ENCODE measurements at regions of chr13 and their contacts with region 1.

Region 1: DNA sequence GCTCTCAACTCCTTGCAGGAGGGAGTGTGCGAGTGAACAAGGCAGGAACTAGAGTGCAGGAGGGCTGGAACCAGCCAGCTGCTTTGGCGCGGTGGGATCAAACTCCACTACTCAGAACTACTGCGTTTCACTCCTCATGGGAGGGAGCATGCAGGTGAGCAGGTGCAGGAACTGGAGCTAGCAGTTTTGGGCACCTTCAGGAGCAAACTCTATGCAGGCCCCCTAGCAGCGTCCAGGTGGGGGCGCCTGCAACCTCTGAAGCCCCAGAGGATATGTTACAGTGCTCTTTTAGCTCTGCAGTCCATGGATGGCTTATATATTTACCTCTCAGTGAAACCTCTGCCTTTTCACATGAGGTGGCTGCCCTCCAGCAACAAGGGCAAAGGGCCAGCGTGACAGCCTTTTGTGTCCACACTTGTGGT is 1303.4 kb downstream of the PCDH9 start:
- DNase-seq: no peak
- ATAC-seq: no peak
- H3K4me3 ChIP-seq: no peak overlapping the region
- H3K27ac ChIP-seq: no peak overlapping the region
- H3K4me1 ChIP-seq: no peaks in the 10 kb centered on the region
- H3K27me3 ChIP-seq: no peaks in the 10 kb centered on the region
- CTCF ChIP-seq: no peak
- POLR2A ChIP-seq: no peak
- RAD21 ChIP-seq: no peak

Region 2: GRCh38 chr13:65943024-65943423 is 16.3 kb after region 1 on chr13:
- CTCF ChIA-PET with region 1: no interaction called
- POLR2A ChIA-PET with region 1: interaction called, 12 read pairs
- dilution Hi-C with region 1: no loop called
- in situ Hi-C with region 1: no loop called
- intact Hi-C with region 1: no loop called
- DNase-seq: peak; percentile 45
- ATAC-seq: no peak
- H3K4me3 ChIP-seq: no peak overlapping the region
- H3K27ac ChIP-seq: no peak overlapping the region
- H3K4me1 ChIP-seq: no peaks in the 10 kb centered on the region
- H3K27me3 ChIP-seq: no peaks in the 10 kb centered on the region
- CTCF ChIP-seq: no peak
- POLR2A ChIP-seq: no peak
- RAD21 ChIP-seq: no peak

Region 3: GRCh38 chr13:65971541-65971940 is 44.8 kb after region 1 on chr13:
- CTCF ChIA-PET with region 1: no interaction called
- POLR2A ChIA-PET with region 1: no interaction called
- dilution Hi-C with region 1: no loop called
- in situ Hi-C with region 1: no loop called
- intact Hi-C with region 1: no loop called
- DNase-seq: no peak
- ATAC-seq: no peak
- H3K4me3 ChIP-seq: no peak overlapping the region
- H3K27ac ChIP-seq: no peak overlapping the region
- H3K4me1 ChIP-seq: no peaks in the 10 kb centered on the region
- H3K27me3 ChIP-seq: no peaks in the 10 kb centered on the region
- CTCF ChIP-seq: no peak
- POLR2A ChIP-seq: no peak
- RAD21 ChIP-seq: no peak

Region 4: GRCh38 chr13:66113882-66114526 is 187.2 kb after region 1 on chr13:
- CTCF ChIA-PET with region 1: no interaction called
- POLR2A ChIA-PET with region 1: no interaction called
- dilution Hi-C with region 1: no loop called
- in situ Hi-C with region 1: no loop called
- intact Hi-C with region 1: loop called (anchors 1 kb)
- DNase-seq: peak; percentile 0
- ATAC-seq: no peak
- H3K4me3 ChIP-seq: no peak overlapping the region
- H3K27ac ChIP-seq: no peak overlapping the region
- H3K4me1 ChIP-seq: no peaks in the 10 kb centered on the region
- H3K27me3 ChIP-seq: no peaks in the 10 kb centered on the region
- CTCF ChIP-seq: no peak
- POLR2A ChIP-seq: no peak
- RAD21 ChIP-seq: no peak

Region 5: DNA sequence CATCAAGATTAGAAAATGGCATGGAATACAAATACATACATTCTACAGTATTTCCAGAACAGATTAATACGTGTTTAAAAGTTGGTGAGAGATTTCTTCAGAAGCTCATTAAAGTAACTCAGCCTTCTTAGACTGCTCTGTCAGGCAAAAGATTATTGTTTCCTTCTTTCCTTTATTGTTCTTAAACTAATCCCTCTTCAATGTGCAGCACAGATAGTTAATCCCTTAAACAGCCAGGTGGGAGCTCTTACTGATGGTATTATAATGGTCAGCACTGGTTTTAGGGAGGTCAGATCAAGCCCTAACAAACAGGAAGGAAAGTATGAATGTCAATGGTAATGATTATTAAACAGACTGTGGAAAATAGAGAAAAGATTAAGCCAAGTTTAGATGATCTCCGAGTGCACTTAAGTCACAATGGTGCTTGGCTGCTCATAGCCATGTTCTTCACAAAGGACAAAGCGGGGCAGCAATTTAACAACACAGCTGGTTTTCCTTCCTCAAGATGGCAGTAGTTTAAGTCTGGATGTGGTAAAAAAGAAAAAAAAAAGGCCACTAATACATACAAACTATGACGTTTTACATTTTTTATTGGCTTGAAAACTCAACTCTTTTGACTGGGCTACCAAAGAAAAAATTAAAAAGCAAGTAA is 310.8 kb after region 1 on chr13:
- CTCF ChIA-PET with region 1: no interaction called
- POLR2A ChIA-PET with region 1: no interaction called
- dilution Hi-C with region 1: no loop called
- in situ Hi-C with region 1: no loop called
- intact Hi-C with region 1: no loop called
- DNase-seq: no peak
- ATAC-seq: no peak
- H3K4me3 ChIP-seq: no peak overlapping the region
- H3K27ac ChIP-seq: no peak overlapping the region
- H3K4me1 ChIP-seq: no peaks in the 10 kb centered on the region
- H3K27me3 ChIP-seq: no peaks in the 10 kb centered on the region
- CTCF ChIP-seq: no peak
- POLR2A ChIP-seq: no peak
- RAD21 ChIP-seq: no peak

Region 6: GRCh38 chr13:66492479-66492878 is 565.7 kb after region 1 on chr13:
- CTCF ChIA-PET with region 1: no interaction called
- POLR2A ChIA-PET with region 1: no interaction called
- dilution Hi-C with region 1: no loop called
- in situ Hi-C with region 1: no loop called
- intact Hi-C with region 1: no loop called
- DNase-seq: no peak
- ATAC-seq: no peak
- H3K4me3 ChIP-seq: no peak overlapping the region
- H3K27ac ChIP-seq: no peak overlapping the region
- H3K4me1 ChIP-seq: no peaks in the 10 kb centered on the region; the same call in 1 of the 2 replicates
- H3K27me3 ChIP-seq: no peaks in the 10 kb centered on the region
- CTCF ChIP-seq: no peak
- POLR2A ChIP-seq: no peak
- RAD21 ChIP-seq: no peak